Left ventricle myocardium inferior (tissue), 1 donor: ENCODE measurements at regions of chr17 and their contacts with region 1.

Region 1: GRCh38 chr17:32783602-32784001 is 93.3 kb downstream of the MYO1D start:
- DNase-seq: no peak
- H3K4me3 ChIP-seq: no peak overlapping the region
- H3K27ac ChIP-seq: no peak overlapping the region
- H3K4me1 ChIP-seq: no peaks in the 10 kb centered on the region
- H3K27me3 ChIP-seq: no peaks in the 10 kb centered on the region
- CTCF ChIP-seq: peak; percentile 85

Region 2: DNA sequence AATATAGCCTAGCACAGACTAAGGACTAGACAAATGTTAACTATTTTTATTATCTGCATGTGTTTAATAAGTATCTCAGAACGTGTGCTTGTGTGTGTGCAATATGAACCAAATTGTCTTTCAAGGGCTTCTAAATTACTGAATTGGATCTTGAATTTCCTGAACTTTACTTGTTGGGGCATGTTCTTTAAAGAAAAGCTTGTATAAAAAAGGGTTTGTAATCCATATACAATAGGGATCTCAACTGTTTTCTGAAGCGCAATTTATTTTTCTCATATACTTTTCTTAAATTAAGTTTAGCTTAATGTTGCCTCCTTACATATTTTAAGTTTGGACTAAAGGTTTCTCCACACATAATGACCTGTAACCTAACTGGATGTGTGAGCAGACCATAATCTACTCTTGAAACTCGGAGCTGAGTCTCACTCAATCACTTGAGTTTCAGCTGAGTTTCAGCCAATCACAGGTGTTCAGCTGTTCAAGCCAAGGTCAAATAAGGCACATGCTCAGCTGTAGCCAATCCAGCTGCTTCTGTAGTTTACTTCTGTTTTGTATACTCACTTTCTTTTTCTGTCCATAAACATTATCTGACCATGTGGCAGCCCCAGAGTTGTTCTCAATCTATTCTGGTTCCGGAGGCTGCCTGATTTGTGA is 224.5 kb before region 1 on chr17:
- intact Hi-C with region 1: no loop called
- DNase-seq: no peak
- H3K4me3 ChIP-seq: no peak overlapping the region
- H3K27ac ChIP-seq: no peak overlapping the region
- H3K4me1 ChIP-seq: peaks cover 8% of the 10 kb centered on the region
- H3K27me3 ChIP-seq: no peaks in the 10 kb centered on the region
- CTCF ChIP-seq: no peak

Region 3: DNA sequence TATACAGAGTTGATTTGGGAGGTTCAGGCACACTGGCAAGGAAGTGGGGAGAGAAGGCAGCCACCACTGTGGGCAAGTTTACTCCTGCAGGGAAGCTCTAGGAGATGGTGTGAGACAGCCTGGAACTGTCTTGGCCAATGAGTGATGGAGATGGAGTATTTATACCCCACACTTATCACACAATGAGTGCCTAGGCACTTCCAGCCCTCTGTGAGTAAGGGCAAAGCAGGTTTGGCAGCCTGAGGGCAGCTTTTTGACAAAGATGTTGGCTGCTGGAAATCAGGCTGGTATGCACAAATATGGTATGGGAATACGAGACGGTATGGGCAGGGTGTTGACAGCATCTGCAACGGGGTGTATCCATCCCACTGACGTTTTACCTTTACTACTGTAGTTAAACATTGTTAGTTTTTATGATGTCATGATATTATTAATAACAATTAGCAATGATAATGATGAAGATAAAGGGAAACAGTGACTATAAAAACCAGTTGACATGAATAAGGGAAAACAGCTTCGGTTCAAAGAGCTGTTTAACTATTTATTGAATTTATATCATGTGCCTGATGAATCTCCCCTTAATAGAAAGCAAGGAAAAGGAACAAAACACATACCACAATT is 146.9 kb before region 1 on chr17:
- intact Hi-C with region 1: no loop called
- DNase-seq: no peak
- H3K4me3 ChIP-seq: no peak overlapping the region
- H3K27ac ChIP-seq: no peak overlapping the region
- H3K4me1 ChIP-seq: no peaks in the 10 kb centered on the region
- H3K27me3 ChIP-seq: no peaks in the 10 kb centered on the region
- CTCF ChIP-seq: no peak

Region 4: DNA sequence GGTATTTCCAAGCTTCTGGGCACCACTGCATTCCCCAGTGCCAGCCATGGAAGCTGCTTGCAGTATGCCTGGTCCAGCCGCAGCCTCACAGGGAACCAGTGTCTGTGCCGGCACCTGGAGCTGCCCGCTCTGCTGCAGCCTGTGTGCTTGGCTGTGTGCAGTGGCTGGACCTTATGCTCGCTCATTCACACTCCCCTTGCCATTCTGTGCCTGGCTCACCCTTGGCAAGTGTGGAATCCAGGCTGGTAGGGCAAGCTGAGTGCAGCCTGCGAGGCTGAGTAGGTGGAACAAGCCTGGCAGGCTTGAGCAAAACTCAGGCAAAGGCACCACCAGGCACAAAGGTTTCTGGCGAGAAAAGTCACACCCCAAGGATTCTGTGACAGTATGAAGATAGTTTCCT is 50.7 kb before region 1 on chr17:
- intact Hi-C with region 1: no loop called
- DNase-seq: no peak
- H3K4me3 ChIP-seq: no peak overlapping the region
- H3K27ac ChIP-seq: no peak overlapping the region
- H3K4me1 ChIP-seq: no peaks in the 10 kb centered on the region
- H3K27me3 ChIP-seq: no peaks in the 10 kb centered on the region
- CTCF ChIP-seq: no peak

Region 5: DNA sequence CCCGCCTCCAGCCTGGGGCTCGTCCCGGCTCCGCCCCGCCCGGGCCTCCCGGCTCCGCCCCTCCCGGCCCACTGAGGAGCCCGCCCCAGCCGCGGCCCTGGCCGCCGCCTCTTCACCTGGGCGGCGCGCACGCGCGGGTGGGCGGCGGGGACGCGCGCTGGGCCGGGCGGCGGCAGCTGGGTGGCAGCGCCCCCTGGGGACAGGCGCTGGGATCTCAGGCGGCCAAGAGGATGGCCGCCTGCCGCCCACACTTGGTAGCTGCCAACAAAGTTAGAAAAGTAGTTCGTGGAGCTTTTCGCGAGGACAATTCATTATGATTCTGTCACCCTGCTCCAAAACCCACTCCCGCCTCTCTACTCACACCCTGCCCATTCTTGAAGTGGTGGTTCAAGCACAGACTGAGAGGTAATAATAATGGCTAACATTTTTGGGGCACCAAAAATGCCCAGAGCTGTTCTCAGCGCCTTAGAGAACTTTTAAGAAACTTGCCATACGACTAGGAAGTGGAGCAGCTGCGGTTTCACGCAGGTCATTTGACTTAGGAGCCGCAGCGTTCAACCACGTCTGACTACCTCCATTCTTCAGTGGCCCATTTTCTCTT is 93.7 kb after region 1 on chr17:
- intact Hi-C with region 1: loop called (anchors 5 kb)
- DNase-seq: peak; percentile 92
- H3K4me3 ChIP-seq: peak overlapping the region; percentile 92
- H3K27ac ChIP-seq: peak overlapping the region; percentile 90
- H3K4me1 ChIP-seq: peaks cover 20% of the 10 kb centered on the region
- H3K27me3 ChIP-seq: peaks cover 4% of the 10 kb centered on the region
- CTCF ChIP-seq: peak; percentile 90

Region 6: GRCh38 chr17:32909787-32910369 is 126.3 kb after region 1 on chr17:
- intact Hi-C with region 1: loop called (anchors 10 kb)
- DNase-seq: no peak
- H3K4me3 ChIP-seq: no peak overlapping the region
- H3K27ac ChIP-seq: no peak overlapping the region
- H3K4me1 ChIP-seq: peaks cover 2% of the 10 kb centered on the region
- H3K27me3 ChIP-seq: peaks cover 7% of the 10 kb centered on the region
- CTCF ChIP-seq: peak; percentile 85